Heart left ventricle (tissue), 16 donors: ENCODE measurements at regions of chr2 and their contacts with region 1.

Region 1: DNA sequence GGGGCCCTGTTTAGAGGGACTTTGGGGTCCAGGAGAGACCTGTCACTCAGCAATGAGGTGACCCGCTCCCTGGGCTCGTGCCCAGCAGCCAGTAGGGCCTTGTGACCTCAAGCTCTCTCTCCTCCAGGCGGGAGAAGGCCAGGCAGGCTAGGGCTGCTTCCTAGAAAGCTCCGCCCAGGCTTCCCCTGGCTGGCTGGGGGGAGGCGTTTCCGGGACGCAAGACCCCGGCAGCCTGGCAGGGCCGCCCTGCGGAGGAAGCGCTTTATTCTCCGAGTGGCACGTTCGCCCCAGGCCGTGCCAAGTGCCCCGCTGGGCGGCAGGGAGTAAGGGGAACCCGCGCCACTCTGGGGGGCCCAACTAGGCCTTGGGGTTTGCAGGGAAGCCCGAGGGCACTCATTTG is 21.2 kb upstream of the EPAS1 start:
- DNase-seq: peak; percentile 82 to 87 (median 87)
- ATAC-seq: peak; percentile 57 to 82 (median 76)
- H3K4me3 ChIP-seq: peak overlapping the region in 3 of 12 donors; percentile 7 to 17 (median 11)
- H3K27ac ChIP-seq: peak overlapping the region in 11 of 12 donors; percentile 20 to 82 (median 73)
- H3K4me1 ChIP-seq: peaks cover 11 to 64% (median 46%) of the 10 kb centered on the region in 12 donors
- H3K27me3 ChIP-seq: no peaks in the 10 kb centered on the region
- CTCF ChIP-seq: no peak
- POLR2A ChIP-seq: no peak

Region 2: GRCh38 chr2:44462934-44463849 is 1812.8 kb before region 1 on chr2:
- intact Hi-C with region 1: no loop called
- DNase-seq: no peak
- ATAC-seq: peak in 2 of 4 donors; percentile 46 to 60
- H3K4me3 ChIP-seq: no peak overlapping the region
- H3K27ac ChIP-seq: no peak overlapping the region
- H3K4me1 ChIP-seq: peaks cover 0 to 6% (median 0%) of the 10 kb centered on the region in 12 donors
- H3K27me3 ChIP-seq: no peaks in the 10 kb centered on the region
- CTCF ChIP-seq: no peak
- POLR2A ChIP-seq: no peak

Region 3: DNA sequence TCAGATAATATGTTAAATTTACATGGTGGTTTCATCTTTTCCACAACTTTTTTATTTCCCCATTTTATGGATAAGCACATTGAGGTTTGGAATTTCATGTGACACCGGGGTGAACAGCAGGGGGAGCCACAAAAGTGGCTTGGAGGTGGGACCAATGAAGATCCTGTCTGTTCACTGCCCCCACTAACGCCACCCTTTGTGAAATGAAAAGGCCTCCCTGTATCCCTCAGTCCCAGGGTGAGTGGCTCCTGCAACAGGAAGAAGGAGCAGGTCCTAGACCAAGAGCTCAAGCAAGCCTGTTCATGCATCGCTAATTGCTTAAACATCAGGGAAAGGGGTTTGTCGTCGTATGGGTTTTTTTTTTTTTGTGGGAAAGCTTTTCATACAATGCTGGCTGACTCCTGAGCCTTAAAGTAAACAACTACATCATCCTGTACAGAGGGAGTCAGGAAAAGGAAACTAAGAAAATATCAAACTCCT is 246.6 kb before region 1 on chr2:
- intact Hi-C with region 1: loop called in 1 of 10 experiments (anchors 5 kb)
- DNase-seq: peak in 4 of 5 donors; percentile 48 to 68 (median 56)
- ATAC-seq: peak; percentile 76 to 96 (median 80)
- H3K4me3 ChIP-seq: no peak overlapping the region
- H3K27ac ChIP-seq: peak overlapping the region; percentile 29 to 87 (median 62)
- H3K4me1 ChIP-seq: peaks cover 0 to 43% (median 12%) of the 10 kb centered on the region in 12 donors
- H3K27me3 ChIP-seq: no peaks in the 10 kb centered on the region
- CTCF ChIP-seq: peak in 11 of 12 donors; percentile 11 to 58 (median 44)
- POLR2A ChIP-seq: no peak

Region 4: GRCh38 chr2:46082521-46083485 is 193.2 kb before region 1 on chr2:
- intact Hi-C with region 1: loop called in 1 of 10 experiments (anchors 10 kb)
- DNase-seq: peak; percentile 75 to 89 (median 79)
- ATAC-seq: peak in 3 of 4 donors; percentile 77 to 94 (median 91)
- H3K4me3 ChIP-seq: no peak overlapping the region
- H3K27ac ChIP-seq: peak overlapping the region in 8 of 12 donors; percentile 23 to 89 (median 56)
- H3K4me1 ChIP-seq: peaks cover 0 to 44% (median 2%) of the 10 kb centered on the region in 12 donors
- H3K27me3 ChIP-seq: no peaks in the 10 kb centered on the region
- CTCF ChIP-seq: no peak
- POLR2A ChIP-seq: no peak

Region 5: GRCh38 chr2:46097714-46098480 is 178.1 kb before region 1 on chr2:
- intact Hi-C with region 1: loop called in 1 of 10 experiments (anchors 10 kb)
- DNase-seq: peak in 4 of 5 donors; percentile 65 to 89 (median 78)
- ATAC-seq: peak; percentile 86 to 96 (median 92)
- H3K4me3 ChIP-seq: no peak overlapping the region
- H3K27ac ChIP-seq: peak overlapping the region; percentile 13 to 88 (median 80)
- H3K4me1 ChIP-seq: peaks cover 0 to 42% (median 19%) of the 10 kb centered on the region in 12 donors
- H3K27me3 ChIP-seq: no peaks in the 10 kb centered on the region
- CTCF ChIP-seq: no peak
- POLR2A ChIP-seq: no peak

Region 6: DNA sequence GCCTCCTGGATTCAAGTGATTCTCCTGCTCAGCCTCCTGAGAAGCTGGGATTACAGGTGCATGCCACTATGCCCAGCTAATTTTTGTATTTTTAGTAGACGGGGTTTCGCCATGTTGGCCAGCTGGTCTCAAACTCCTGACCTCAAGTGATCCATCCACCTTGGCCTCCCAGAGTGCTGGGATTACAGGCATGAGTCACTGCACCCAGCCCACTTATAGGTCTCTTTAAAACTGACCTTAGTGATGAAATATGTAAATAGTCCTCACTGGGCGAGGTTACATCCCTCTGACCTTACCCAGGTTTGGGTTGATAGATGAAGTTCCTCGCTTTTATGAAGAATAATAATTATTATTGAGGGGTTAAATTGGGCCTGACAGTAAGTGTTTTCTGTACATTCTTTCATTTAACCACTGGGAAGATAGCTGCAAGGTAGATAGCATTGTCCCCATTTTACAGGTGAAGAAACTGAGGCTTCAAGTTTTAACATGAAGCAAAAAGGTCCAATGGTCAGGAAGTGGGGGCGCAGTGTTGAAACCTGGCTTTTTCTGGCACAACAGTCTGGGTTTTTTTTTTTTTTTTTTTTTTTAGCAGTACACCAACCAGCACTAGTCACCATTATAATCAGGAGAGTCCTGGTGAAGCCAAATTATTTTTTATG is 153.5 kb before region 1 on chr2:
- intact Hi-C with region 1: loop called in 1 of 10 experiments (anchors 5 kb)
- DNase-seq: no peak
- ATAC-seq: no peak
- H3K4me3 ChIP-seq: no peak overlapping the region
- H3K27ac ChIP-seq: peak overlapping the region in 3 of 12 donors; percentile 22 to 90 (median 72)
- H3K4me1 ChIP-seq: peaks cover 4 to 60% (median 46%) of the 10 kb centered on the region in 12 donors
- H3K27me3 ChIP-seq: no peaks in the 10 kb centered on the region
- CTCF ChIP-seq: no peak
- POLR2A ChIP-seq: no peak

Region 7: DNA sequence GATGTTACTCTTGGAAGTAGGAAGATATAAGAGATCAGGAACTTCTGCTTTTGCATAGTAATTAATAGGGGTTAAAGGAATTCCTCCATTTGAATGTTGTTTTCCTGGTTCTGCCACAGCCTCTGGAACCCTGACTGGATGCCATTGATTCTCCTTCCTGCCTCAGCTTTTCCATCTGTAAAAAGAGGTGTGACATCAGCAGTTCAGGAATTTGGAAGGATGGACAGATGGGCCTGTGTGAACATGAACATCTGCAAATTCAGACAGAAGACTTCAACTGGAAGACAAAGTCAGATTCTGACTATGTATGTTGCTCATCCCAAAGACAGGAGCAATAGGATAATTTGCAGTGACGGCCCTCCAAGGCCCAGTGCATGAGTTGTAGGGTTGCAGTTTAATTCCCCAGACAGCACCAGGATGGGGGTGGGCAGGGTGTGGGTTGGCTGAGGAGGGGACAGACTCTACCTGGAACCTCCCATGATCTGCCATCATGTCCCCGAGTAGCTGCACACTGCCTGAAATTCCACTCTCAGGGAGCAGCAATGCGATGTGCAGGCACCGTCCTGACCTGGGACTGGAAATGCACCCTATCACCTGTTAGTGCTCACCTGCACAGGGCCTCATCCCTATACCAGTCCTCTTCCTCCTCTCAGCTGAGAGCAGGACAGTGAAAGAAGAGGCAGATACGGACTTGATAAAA is 77.7 kb before region 1 on chr2:
- intact Hi-C with region 1: loop called in 2 of 10 experiments (anchors 5 kb)
- DNase-seq: no peak
- ATAC-seq: no peak
- H3K4me3 ChIP-seq: no peak overlapping the region
- H3K27ac ChIP-seq: peak overlapping the region in 8 of 12 donors; percentile 10 to 75 (median 62)
- H3K4me1 ChIP-seq: peaks cover 4 to 53% (median 41%) of the 10 kb centered on the region in 12 donors
- H3K27me3 ChIP-seq: no peaks in the 10 kb centered on the region
- CTCF ChIP-seq: no peak
- POLR2A ChIP-seq: no peak

Region 8: GRCh38 chr2:46257476-46257875 is 18.5 kb before region 1 on chr2:
- intact Hi-C with region 1: loop called in 1 of 10 experiments (anchors 2 kb)
- DNase-seq: peak in 1 of 5 donors; percentile 50
- ATAC-seq: peak; percentile 34 to 71 (median 60)
- H3K4me3 ChIP-seq: no peak overlapping the region
- H3K27ac ChIP-seq: peak overlapping the region; percentile 12 to 78 (median 59)
- H3K4me1 ChIP-seq: peaks cover 3 to 65% (median 46%) of the 10 kb centered on the region in 12 donors
- H3K27me3 ChIP-seq: no peaks in the 10 kb centered on the region
- CTCF ChIP-seq: no peak
- POLR2A ChIP-seq: no peak